Gastrocnemius medialis (tissue), 4 donors: ENCODE measurements at regions of chr12 and their contacts with region 1.

Region 1: DNA sequence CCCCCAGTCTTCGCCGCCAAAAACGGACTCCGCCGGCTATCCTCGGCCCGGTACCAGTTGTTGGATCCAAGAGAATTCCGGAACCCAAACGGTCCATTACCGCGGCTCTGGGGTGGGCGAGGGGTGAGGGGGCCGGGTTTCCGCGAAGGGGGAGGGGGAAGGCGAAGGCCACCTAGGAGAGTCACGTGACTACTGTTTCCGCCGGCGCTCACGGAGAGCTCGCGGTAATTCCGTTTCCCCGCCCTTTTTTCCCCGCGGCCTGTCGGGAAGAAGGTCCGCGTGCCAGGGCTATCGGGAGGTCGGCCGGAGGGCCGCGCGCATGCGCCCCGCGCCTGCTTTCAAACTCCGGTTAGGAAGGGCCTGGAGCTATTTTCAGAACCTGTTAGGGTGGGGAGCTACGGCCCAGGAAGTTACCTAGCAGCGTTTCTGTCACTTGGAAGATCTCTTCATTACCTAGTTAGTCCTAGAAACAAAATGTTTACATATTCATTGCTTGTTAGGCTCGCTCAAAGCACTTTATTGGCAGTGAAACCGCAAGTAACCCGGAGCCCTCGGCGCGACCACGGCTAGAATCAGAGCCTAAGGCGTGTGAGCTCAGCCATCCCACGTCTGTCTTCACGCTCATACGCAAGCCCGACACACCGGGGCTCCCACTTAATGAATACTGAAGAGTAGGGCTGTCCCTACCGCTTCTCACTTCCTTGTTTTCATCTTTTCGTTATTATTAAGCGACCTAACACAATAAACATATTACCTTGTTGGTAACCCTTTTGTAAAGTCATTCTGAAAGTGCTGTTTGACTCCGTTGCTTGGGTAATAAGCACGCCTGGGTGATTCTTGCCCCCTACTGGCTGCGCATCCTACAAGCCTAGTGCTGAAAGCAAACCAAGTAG is 624 bp upstream of the SBNO1 start:
- DNase-seq: peak; percentile 99
- ATAC-seq: peak; percentile 88 to 89
- H3K4me3 ChIP-seq: peak overlapping the region; percentile 74 to 84 (median 79)
- H3K27ac ChIP-seq: peak overlapping the region; percentile 89 to 99 (median 94)
- H3K4me1 ChIP-seq: peaks cover 7 to 24% of the 10 kb centered on the region in 2 donors
- H3K27me3 ChIP-seq: no peaks in the 10 kb centered on the region
- CTCF ChIP-seq: peak; percentile 54 to 81 (median 75)
- POLR2A ChIP-seq: peak; percentile 79 to 84

Region 2: GRCh38 chr12:122481861-122482260 is 883.4 kb before region 1 on chr12:
- in situ Hi-C with region 1: no loop called
- intact Hi-C with region 1: no loop called
- DNase-seq: no peak
- ATAC-seq: no peak
- H3K4me3 ChIP-seq: no peak overlapping the region
- H3K27ac ChIP-seq: no peak overlapping the region
- H3K4me1 ChIP-seq: no peaks in the 10 kb centered on the region
- H3K27me3 ChIP-seq: no peaks in the 10 kb centered on the region
- CTCF ChIP-seq: no peak
- POLR2A ChIP-seq: no peak

Region 3: GRCh38 chr12:123163227-123163626 is 202.0 kb before region 1 on chr12:
- in situ Hi-C with region 1: no loop called
- intact Hi-C with region 1: no loop called
- DNase-seq: no peak
- ATAC-seq: no peak
- H3K4me3 ChIP-seq: no peak overlapping the region
- H3K27ac ChIP-seq: no peak overlapping the region
- H3K4me1 ChIP-seq: no peaks in the 10 kb centered on the region
- H3K27me3 ChIP-seq: no peaks in the 10 kb centered on the region
- CTCF ChIP-seq: no peak
- POLR2A ChIP-seq: no peak

Region 4: GRCh38 chr12:123232807-123233543 is 132.3 kb before region 1 on chr12 and contains the starts of genes MPHOSPH9 and MTRFR:
- in situ Hi-C with region 1: no loop called
- intact Hi-C with region 1: loop called (anchors 2 kb)
- DNase-seq: peak; percentile 100
- ATAC-seq: peak; percentile 96
- H3K4me3 ChIP-seq: peak within 1 kb of the TSS; percentile 88 to 96 (median 92)
- H3K27ac ChIP-seq: peak within 1 kb of the TSS; percentile 95 to 99 (median 97)
- H3K4me1 ChIP-seq: peaks cover 25 to 30% of the 10 kb centered on the region in 2 donors
- H3K27me3 ChIP-seq: no peaks in the 10 kb centered on the region
- CTCF ChIP-seq: peak in 1 of 5 experiments; percentile 10
- POLR2A ChIP-seq: peak; percentile 99 to 100
- total RNA-seq, gene MPHOSPH9: 8.5 to 35.4 (median 12.7) TPM
- total RNA-seq, gene MTRFR: 4.7 to 14.1 (median 5.6) TPM

Region 5: DNA sequence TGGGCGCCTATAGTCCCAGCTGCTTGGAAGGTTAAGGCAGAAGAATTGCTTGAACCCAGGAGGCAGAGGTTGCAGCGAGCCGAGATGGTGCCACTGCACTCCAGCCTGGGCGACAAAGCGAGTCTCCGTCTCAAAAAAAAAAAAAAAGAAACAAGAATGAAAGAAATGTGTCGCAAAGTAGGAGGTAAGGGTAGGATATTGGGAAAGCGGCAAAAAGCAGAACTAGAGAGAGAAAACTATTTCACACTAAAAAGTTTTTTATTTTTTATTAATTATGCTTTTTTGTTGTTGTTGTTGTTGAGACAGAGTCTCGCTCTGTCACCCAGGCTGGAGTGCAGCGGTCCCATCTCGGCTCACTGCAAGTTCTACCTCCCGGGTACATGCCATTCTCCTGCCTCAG is 18.3 kb before region 1 on chr12:
- in situ Hi-C with region 1: no loop called
- intact Hi-C with region 1: no loop called
- DNase-seq: no peak
- ATAC-seq: no peak
- H3K4me3 ChIP-seq: no peak overlapping the region
- H3K27ac ChIP-seq: no peak overlapping the region
- H3K4me1 ChIP-seq: no peaks in the 10 kb centered on the region
- H3K27me3 ChIP-seq: no peaks in the 10 kb centered on the region
- CTCF ChIP-seq: no peak
- POLR2A ChIP-seq: no peak

Region 6: DNA sequence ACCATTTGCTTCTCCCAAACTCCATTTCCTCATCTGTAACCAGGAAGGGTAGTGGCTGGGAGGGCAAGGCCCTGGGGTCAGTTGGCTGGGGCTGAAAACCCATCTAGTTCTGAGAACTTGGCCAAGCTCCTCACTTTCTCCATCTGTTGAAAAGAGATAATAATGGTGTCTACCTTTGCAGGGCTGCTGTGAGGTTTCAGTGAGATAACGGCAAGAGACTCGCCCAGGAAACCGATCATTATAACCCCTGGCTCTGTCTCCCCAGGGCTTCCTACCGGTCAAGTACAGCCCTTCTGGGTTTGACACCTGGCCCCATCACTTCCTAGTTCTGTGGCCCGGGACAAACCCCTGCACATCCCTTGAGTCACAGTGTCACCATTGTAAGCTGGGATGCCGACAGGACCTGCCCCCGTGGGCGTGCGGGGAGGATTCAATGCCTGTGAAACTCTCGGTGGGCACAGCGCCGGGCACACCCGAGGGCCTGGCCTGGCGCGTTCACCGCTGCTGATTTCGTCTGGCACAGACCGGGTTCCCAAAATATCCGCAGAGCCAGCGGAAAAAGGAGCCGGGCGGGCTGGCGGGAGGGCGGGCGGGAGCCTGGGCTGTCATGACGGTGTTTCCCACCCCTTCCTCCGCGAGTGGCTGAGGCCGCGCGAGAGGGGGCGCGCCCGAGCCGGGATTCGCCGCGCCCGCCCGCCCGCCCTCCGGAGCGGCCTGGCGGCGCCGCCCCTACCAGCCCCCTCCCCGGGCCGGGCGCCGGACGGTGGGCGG is 23.1 kb after region 1 on chr12:
- in situ Hi-C with region 1: no loop called
- intact Hi-C with region 1: loop called (anchors 1 kb)
- DNase-seq: peak; percentile 63 to 77
- ATAC-seq: peak; percentile 57 to 61
- H3K4me3 ChIP-seq: peak overlapping the region; percentile 63 to 74 (median 66)
- H3K27ac ChIP-seq: peak overlapping the region; percentile 86 to 96 (median 94)
- H3K4me1 ChIP-seq: peaks cover 46 to 51% of the 10 kb centered on the region in 2 donors
- H3K27me3 ChIP-seq: no peaks in the 10 kb centered on the region
- CTCF ChIP-seq: no peak
- POLR2A ChIP-seq: peak in 1 of 2 donors; percentile 8

Region 7: DNA sequence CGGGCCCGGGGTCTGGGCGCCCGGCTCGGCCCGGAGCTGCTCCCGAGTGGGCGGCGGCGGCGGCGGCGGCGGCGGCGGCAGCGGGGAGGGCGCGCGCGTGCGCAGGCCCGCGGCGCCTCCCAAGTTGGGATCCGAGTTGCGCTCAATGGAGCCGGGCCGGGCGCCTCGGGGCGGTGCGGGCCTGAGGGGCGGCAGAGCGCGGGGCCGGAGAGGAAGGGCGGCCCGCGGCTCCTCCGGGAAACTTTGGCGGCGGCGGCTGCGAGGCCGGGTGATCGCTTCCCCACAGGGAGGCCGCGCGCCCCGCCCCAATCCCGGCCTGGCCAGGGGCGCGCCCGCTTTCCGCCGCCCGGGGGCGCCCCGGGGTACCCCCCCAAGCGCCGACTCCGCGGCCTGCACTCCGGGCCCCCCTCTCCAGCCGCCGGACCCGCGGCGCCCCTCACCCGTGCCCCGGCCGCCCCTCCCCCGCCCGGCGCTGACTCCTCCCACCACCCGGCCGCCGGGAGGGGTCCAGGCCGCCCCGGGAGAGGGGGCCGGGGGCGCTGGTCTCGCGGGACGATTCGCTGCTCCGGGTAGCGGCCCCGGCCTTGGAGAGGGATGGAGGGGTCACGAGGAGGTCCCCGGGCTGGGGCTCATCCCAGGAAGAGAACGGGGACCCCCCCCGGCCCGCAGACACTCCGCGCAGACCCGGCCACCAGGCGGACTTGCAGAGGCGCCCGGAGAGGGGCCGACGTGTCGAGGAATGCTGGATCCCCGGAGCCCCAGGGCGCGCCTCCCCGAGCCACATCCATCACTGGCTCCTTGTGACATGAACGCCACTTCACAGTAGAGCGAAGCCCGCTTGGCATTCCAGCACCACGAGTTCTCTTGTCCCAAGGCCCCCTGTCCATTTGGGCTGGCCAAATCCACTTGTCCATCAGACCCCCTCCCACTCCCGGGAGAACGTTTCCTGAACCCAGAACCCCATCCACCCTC is 168.7 kb after region 1 on chr12 and contains the start of gene RILPL1:
- in situ Hi-C with region 1: no loop called
- intact Hi-C with region 1: loop called (anchors 2 kb)
- DNase-seq: peak in 1 of 2 donors; percentile 47
- ATAC-seq: peak; percentile 63 to 66
- H3K4me3 ChIP-seq: peak within 1 kb of the TSS; percentile 68 to 94 (median 86)
- H3K27ac ChIP-seq: peak within 1 kb of the TSS; percentile 89 to 91 (median 90)
- H3K4me1 ChIP-seq: peaks cover 26 to 38% of the 10 kb centered on the region in 2 donors
- H3K27me3 ChIP-seq: no peaks in the 10 kb centered on the region
- CTCF ChIP-seq: peak in 4 of 5 experiments; percentile 49 to 61 (median 53)
- POLR2A ChIP-seq: peak; percentile 26 to 52
- total RNA-seq, gene RILPL1: 33.4 to 65.3 (median 40.6) TPM

Region 8: GRCh38 chr12:123601602-123602489 is 236.6 kb after region 1 on chr12 and contains the start of gene DDX55:
- in situ Hi-C with region 1: no loop called
- intact Hi-C with region 1: loop called (anchors 1 kb)
- DNase-seq: peak; percentile 77 to 79
- ATAC-seq: peak; percentile 96 to 98
- H3K4me3 ChIP-seq: peak within 1 kb of the TSS; percentile 85 to 95 (median 94)
- H3K27ac ChIP-seq: peak within 1 kb of the TSS; percentile 79 to 93 (median 86)
- H3K4me1 ChIP-seq: peaks cover 20 to 21% of the 10 kb centered on the region in 2 donors
- H3K27me3 ChIP-seq: no peaks in the 10 kb centered on the region
- CTCF ChIP-seq: peak; percentile 70 to 89 (median 81)
- POLR2A ChIP-seq: peak; percentile 39 to 75
- total RNA-seq, gene DDX55: 6.2 to 9.4 (median 7.4) TPM